Activated naive CD4-positive, alpha-beta T cell treated with anti-CD3 and anti-CD28 coated beads for 36 hours (primary cell): ENCODE measurements at regions of chr1 and their contacts with region 1.

Region 1: DNA sequence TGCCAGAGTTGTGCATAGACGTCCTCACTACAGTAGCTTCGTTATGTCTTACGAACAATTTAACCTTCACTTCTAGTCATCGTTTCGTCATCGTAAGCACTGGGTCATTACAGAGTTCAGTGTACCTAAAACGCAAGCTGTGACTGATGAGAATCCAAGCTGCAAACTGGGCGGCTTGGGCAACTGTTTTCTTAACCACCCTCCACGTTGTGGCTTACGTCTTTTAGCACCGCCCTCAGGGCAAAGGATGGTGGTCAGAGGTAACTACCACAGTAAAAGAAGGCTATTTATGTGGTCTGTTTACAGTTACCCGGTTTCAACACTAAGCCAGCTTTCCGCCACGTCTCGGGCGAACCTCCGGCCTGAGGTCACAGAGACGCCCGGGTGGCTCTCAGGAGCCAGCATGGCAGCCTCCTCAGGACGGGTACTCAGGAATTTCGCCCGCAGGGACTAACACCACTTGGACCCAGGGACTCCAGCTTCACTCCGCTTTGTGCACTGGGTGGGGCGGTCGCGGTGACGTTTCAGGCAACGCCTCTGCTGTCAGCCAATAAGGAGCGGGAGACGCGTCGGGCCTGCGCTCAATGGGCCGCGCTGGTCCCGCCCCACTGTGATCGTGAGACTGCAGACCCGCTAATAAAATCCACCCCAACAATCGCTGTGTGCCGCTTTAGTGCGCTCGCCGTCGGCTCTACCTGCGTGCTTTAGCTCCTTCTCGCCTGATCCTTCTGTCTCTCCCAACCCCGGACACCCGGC is at the start of gene CTH:
- DNase-seq: peak; percentile 95
- H3K4me3 Mint-ChIP-seq: peak within 1 kb of the TSS; percentile 98
- H3K27ac Mint-ChIP-seq: peak within 1 kb of the TSS; percentile 81
- H3K4me1 Mint-ChIP-seq: peaks cover 16% of the 10 kb centered on the region
- H3K27me3 Mint-ChIP-seq: no peaks in the 10 kb centered on the region
- total RNA-seq, gene CTH: 30.3 to 36.1 TPM

Region 2: DNA sequence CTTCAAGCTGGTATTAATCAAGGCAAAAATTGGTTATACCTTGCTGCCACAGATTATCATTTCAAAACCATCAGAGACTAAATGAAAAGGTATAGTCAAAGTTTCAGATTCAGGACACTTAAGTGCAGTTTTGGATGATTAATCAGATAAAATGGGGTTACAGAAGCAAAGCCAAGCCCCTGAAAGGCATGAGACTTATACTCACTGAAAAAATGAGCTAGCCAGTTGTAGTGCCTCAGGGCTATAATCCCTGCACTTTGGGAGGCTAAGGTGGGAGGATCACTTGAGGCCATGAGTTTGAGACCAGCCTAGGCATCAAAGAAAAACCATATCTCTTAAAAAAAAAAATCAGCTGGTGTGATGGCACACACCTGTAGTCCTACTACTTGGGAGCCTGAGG is 220.6 kb before region 1 on chr1:
- CTCF ChIA-PET with region 1: no interaction called
- intact Hi-C with region 1: no loop called
- DNase-seq: no peak
- H3K4me3 Mint-ChIP-seq: no peak overlapping the region
- H3K27ac Mint-ChIP-seq: no peak overlapping the region
- H3K4me1 Mint-ChIP-seq: peaks cover 13% of the 10 kb centered on the region
- H3K27me3 Mint-ChIP-seq: no peaks in the 10 kb centered on the region

Region 3: DNA sequence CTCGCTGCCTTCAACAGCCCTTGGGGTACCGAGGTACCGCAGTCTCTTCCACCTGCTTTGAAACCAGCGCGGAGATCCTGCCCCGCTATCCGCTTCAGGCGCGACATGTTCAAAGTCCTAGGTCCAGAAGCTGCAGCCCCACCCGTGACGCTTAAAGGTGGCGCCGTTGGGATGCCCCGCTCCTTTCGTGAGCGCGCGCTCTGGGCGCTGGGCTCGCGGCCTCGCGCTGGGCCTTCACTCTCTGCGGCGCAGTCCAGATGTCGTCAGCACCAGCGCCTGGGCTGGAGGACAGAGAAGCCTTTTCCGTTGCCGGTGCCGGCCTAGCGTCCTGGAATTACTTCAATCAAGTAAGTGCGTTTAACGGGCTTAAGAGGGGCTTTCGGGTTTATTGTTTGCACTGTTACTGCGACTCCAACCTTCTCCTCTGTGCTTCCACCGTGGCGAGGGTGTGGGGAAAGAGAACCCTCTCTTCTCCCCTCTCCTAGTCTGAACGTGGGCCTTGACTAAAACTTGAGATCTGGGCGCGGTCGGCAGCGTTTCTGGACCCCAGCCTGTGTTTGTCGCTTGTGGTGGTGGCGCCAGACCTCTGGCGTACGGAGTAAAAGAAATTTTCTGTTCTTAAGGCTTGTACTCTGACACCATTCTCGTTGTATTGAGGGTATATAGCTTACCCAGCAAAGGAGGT is 205.2 kb before region 1 on chr1 and contains the start of gene LRRC40:
- CTCF ChIA-PET with region 1: no interaction called
- intact Hi-C with region 1: loop called (anchors 1 kb)
- DNase-seq: peak; percentile 97
- H3K4me3 Mint-ChIP-seq: peak within 1 kb of the TSS; percentile 96
- H3K27ac Mint-ChIP-seq: peak within 1 kb of the TSS; percentile 95
- H3K4me1 Mint-ChIP-seq: peaks cover 62% of the 10 kb centered on the region
- H3K27me3 Mint-ChIP-seq: no peaks in the 10 kb centered on the region
- total RNA-seq, gene LRRC40: 20.4 to 20.5 TPM

Region 4: DNA sequence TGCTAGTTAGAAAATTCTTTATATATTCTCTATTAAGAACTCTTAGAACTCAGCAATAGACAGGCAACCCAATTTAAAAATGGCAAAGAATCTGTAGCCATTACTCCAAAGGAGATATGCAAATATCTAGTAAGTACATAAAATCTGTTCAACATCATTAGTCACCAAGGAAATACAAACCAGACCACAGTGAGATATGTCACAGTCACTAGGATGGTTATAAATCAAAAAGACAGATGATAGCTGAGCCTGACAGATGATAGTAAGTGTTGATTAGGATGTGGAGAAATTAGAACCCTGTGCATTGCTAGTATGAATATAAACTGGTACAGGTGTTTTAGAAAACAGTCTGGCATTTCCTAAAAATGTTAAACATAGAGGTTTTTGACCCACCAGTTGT is 163.0 kb before region 1 on chr1:
- CTCF ChIA-PET with region 1: no interaction called
- intact Hi-C with region 1: loop called (anchors 5 kb)
- DNase-seq: no peak
- H3K4me3 Mint-ChIP-seq: no peak overlapping the region
- H3K27ac Mint-ChIP-seq: peak overlapping the region; percentile 84
- H3K4me1 Mint-ChIP-seq: peaks cover 34% of the 10 kb centered on the region
- H3K27me3 Mint-ChIP-seq: no peaks in the 10 kb centered on the region

Region 5: GRCh38 chr1:71068325-71069240 is 657.8 kb after region 1 on chr1:
- CTCF ChIA-PET with region 1: no interaction called
- intact Hi-C with region 1: loop called (anchors 5 kb)
- DNase-seq: no peak
- H3K4me3 Mint-ChIP-seq: no peak overlapping the region
- H3K27ac Mint-ChIP-seq: no peak overlapping the region
- H3K4me1 Mint-ChIP-seq: peaks cover 4% of the 10 kb centered on the region
- H3K27me3 Mint-ChIP-seq: no peaks in the 10 kb centered on the region

Region 6: GRCh38 chr1:72282271-72283021 is 1871.7 kb after region 1 on chr1 and contains the start of gene NEGR1:
- CTCF ChIA-PET with region 1: no interaction called
- intact Hi-C with region 1: loop called (anchors 5 kb)
- DNase-seq: peak; percentile 56
- H3K4me3 Mint-ChIP-seq: peak within 1 kb of the TSS; percentile 65
- H3K27ac Mint-ChIP-seq: no peak within 1 kb of the TSS
- H3K4me1 Mint-ChIP-seq: peaks cover 17% of the 10 kb centered on the region
- H3K27me3 Mint-ChIP-seq: peaks cover 29% of the 10 kb centered on the region
- total RNA-seq, gene NEGR1: not detected